ENCODE measurements at regions of chr20 and their contacts with region 1.

Region 1: DNA sequence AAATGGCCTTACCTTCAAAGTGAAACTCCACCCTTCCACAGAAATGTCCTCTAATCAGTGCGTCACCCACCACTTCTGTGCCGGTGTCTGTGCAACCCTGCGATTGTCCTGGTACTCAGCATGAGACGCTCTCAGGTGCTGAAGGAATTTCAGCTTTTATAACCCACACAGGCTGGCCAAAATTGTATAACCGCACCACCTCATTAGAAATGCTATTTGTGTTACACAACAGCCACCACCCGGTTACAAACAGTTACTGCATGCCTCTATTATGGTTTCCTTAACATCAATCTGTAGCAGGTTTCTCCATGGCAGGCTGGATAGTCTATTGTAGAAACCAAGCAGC is 51.5 kb downstream of the SLC23A2 start:
- DNase-seq: no peak
- ATAC-seq: peak; percentile 82
- H3K4me3 ChIP-seq: 0 out of 2 replicates have a peak overlapping the region, but pooled peaks have one; percentile 37
- H3K27ac ChIP-seq: peak overlapping the region; percentile 24; the same call in 1 of the 2 replicates
- H3K4me1 ChIP-seq: peaks cover 21% of the 10 kb centered on the region
- H3K27me3 ChIP-seq: no peaks in the 10 kb centered on the region
- CTCF ChIP-seq: peak; percentile 60 to 82 (median 72); a peak in 5 of 6 replicates
- EP300 ChIP-seq: no peak
- POLR2A ChIP-seq: no peak
- RAD21 ChIP-seq: peak; percentile 85

Region 2: DNA sequence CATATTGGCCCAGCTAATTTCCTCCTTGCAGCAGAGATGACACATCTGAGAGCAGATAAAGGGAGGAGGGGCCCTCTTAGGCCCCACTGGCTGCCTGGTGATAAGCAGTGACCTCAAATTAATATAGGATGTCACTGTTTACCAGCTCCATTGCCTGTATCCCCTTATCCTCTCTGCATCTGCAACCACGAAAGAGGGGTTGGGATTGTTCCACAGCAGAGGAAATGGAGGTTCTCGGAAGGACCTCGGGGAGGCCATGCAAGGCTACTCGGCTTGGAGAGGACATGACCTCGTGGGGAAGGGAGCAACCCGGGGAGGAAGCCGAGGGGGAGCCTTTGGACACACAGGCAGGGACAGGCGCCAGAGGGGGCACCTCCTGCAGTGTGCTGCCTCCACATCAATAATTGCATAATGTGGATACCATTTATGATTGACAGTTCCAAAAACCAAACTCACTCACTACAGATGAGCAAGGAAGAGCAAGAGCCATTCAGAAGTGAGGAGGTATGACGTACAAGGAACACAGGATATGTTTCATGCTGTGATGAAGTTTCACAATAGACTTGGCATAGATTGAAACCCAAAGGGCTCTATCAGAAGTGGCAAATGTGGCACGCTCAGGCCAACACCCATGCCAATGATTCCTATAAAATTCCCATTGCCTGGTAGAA is 757.3 kb before region 1 on chr20:
- CTCF ChIA-PET with region 1: no interaction called
- POLR2A ChIA-PET with region 1: no interaction called
- RAD21 ChIA-PET with region 1: no interaction called
- SMC1A ChIA-PET with region 1: no interaction called
- in situ Hi-C with region 1: no loop called
- intact Hi-C with region 1: no loop called
- DNase-seq: no peak
- ATAC-seq: no peak
- H3K4me3 ChIP-seq: no peak overlapping the region
- H3K27ac ChIP-seq: no peak overlapping the region
- H3K4me1 ChIP-seq: no peaks in the 10 kb centered on the region
- H3K27me3 ChIP-seq: peaks cover 0 to 3% of the 10 kb centered on the region in 2 experiments; a peak in 1 of 4 replicates
- CTCF ChIP-seq: no peak
- EP300 ChIP-seq: no peak
- POLR2A ChIP-seq: no peak
- RAD21 ChIP-seq: no peak

Region 3: DNA sequence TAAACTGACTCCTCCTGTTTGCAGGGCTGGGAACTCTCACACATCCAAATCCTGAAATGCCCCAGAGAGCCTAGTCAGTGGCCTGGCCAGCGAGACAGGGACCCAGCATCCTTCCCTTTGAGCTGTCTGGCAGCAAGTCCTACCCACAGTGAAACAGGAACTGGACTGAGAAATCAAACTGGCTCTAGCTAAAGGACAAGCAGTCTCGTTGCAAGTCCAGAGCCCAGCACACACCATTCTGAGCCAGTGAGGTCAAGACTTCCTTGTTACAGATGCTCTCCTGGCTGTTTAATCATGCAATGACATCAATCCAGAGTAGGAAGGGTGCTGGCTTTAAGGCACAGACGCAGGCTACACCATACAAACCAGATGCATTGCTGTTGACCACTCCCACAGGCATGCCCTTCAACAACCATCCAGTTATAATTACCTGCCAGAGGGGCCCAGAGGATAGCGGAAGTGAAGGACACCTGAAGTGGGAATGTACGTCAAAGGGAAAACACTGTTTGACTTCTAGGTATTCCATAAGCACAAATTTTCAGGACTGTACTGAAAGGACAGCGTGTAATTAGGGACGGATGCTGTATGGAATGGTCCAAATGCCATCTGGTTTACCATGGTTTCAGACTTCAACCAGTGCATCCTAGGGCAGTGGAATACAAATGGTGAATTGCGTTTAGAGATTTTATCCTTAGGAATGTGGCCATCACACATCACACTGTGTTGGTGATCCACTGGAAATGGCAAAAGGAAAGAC is 62.9 kb before region 1 on chr20:
- CTCF ChIA-PET with region 1: interaction called, 3 read pairs
- POLR2A ChIA-PET with region 1: interaction called, 4 read pairs
- RAD21 ChIA-PET with region 1: no interaction called
- SMC1A ChIA-PET with region 1: interaction called, 11 read pairs
- in situ Hi-C with region 1: no loop called
- intact Hi-C with region 1: no loop called
- DNase-seq: no peak
- ATAC-seq: no peak
- H3K4me3 ChIP-seq: no peak overlapping the region
- H3K27ac ChIP-seq: no peak overlapping the region
- H3K4me1 ChIP-seq: no peaks in the 10 kb centered on the region
- H3K27me3 ChIP-seq: no peaks in the 10 kb centered on the region
- CTCF ChIP-seq: no peak
- EP300 ChIP-seq: no peak
- POLR2A ChIP-seq: no peak
- RAD21 ChIP-seq: no peak